Activated B cell treated with CpG ODN at 0.5 μM for 24 hours (primary cell): ENCODE measurements at regions of chr2 and their contacts with region 1.

Region 1: GRCh38 chr2:161273038-161273760 is 35.0 kb upstream of the PSMD14 start:
- DNase-seq: no peak
- ATAC-seq: peak; percentile 18
- H3K4me3 Mint-ChIP-seq: no peak overlapping the region
- H3K27ac Mint-ChIP-seq: no peak overlapping the region
- H3K4me1 Mint-ChIP-seq: no peaks in the 10 kb centered on the region
- H3K27me3 Mint-ChIP-seq: no peaks in the 10 kb centered on the region
- CTCF ChIP-seq: no peak

Region 2: DNA sequence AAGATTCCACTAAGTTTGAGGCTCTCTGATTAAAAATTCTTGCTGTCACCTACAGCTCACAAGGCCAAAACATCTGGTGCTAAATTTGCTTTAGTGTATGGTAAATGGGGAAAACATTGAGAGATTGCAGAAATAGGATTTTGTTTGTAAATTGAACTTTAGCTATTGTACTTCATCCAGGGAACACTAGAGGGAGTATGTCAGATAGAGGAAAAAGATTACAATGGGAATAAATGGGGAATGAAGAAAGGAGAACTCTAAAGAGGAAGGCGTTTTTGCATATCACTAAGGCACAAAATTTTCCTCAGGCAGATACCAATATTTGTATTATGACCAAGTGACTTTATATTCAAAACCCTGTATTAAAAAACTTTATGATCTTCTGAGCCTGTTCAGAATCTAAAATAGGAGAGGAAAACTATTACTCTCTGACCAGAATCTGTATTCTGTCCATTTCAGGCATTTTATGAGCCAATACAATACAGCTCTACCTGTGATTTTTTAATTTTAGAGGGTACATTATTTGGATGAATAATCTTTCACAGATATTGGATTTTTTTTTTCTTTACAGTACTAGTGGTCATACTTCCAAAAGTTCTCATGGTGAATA is 1020.8 kb before region 1 on chr2:
- CTCF ChIA-PET with region 1: no interaction called
- POLR2A ChIA-PET with region 1: no interaction called
- intact Hi-C with region 1: loop called (anchors 1 kb)
- DNase-seq: no peak
- ATAC-seq: no peak
- H3K4me3 Mint-ChIP-seq: no peak overlapping the region
- H3K27ac Mint-ChIP-seq: no peak overlapping the region
- H3K4me1 Mint-ChIP-seq: peaks cover 6% of the 10 kb centered on the region
- H3K27me3 Mint-ChIP-seq: peaks cover 8% of the 10 kb centered on the region
- CTCF ChIP-seq: peak; percentile 71

Region 3: GRCh38 chr2:160353166-160353565 is 920.0 kb before region 1 on chr2:
- CTCF ChIA-PET with region 1: no interaction called
- POLR2A ChIA-PET with region 1: no interaction called
- intact Hi-C with region 1: loop called (anchors 1 kb)
- DNase-seq: no peak
- ATAC-seq: peak; percentile 70
- H3K4me3 Mint-ChIP-seq: no peak overlapping the region
- H3K27ac Mint-ChIP-seq: no peak overlapping the region
- H3K4me1 Mint-ChIP-seq: peaks cover 10% of the 10 kb centered on the region
- H3K27me3 Mint-ChIP-seq: no peaks in the 10 kb centered on the region
- CTCF ChIP-seq: no peak

Region 4: GRCh38 chr2:160994141-160995002 is 278.8 kb before region 1 on chr2:
- CTCF ChIA-PET with region 1: interaction called, 4 read pairs
- POLR2A ChIA-PET with region 1: no interaction called
- intact Hi-C with region 1: loop called (anchors 5 kb)
- DNase-seq: no peak
- ATAC-seq: peak; percentile 37
- H3K4me3 Mint-ChIP-seq: no peak overlapping the region
- H3K27ac Mint-ChIP-seq: no peak overlapping the region
- H3K4me1 Mint-ChIP-seq: peaks cover 3% of the 10 kb centered on the region
- H3K27me3 Mint-ChIP-seq: no peaks in the 10 kb centered on the region
- CTCF ChIP-seq: peak; percentile 38

Region 5: GRCh38 chr2:161223139-161223732 is 50.0 kb before region 1 on chr2:
- CTCF ChIA-PET with region 1: interaction called, 30 read pairs
- POLR2A ChIA-PET with region 1: no interaction called
- intact Hi-C with region 1: loop called (anchors 1 kb)
- DNase-seq: no peak
- ATAC-seq: peak; percentile 67
- H3K4me3 Mint-ChIP-seq: no peak overlapping the region
- H3K27ac Mint-ChIP-seq: no peak overlapping the region
- H3K4me1 Mint-ChIP-seq: peaks cover 2% of the 10 kb centered on the region
- H3K27me3 Mint-ChIP-seq: no peaks in the 10 kb centered on the region
- CTCF ChIP-seq: no peak

Region 6: DNA sequence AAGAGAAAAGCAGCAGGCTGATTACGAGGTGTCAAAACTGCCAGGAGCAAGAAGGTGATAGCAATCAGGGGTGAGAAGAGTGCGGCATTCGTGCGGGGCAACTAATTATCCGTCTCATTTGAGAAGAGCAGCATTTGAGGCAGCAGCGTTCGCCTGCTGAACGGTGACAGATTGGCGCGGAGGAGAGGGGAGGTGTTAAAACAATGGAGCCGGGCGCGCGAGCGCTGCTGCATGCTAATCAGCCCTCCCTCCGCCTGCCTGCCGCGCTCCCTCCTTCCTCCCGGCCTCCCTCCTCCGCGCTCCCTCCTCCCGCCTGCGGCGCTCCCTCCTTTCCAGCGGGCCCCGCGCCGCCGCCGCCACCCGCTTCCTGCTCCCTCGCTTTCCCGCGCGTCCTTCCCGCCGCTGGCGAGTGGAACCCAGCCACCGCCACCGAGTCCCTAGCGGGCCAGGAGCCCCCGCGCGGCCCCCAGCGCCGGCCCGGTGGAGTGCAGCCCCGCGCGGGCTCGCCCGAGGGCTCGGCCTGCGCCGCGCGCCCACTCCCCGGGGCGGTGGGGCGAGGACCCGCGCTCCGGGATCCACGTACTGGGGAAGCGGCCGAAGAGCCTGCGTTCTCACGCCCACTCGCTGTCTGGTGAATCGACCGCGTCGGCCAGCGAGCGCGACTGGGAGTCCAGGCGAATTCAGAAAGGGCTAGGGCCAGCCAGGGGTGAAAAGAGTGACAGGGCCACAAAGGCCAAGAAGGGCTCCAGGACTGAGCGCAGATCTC is 34.5 kb before region 1 on chr2:
- CTCF ChIA-PET with region 1: no interaction called
- POLR2A ChIA-PET with region 1: no interaction called
- intact Hi-C with region 1: loop called (anchors 1 kb)
- DNase-seq: peak; percentile 41
- ATAC-seq: peak; percentile 45
- H3K4me3 Mint-ChIP-seq: peak overlapping the region; percentile 86
- H3K27ac Mint-ChIP-seq: peak overlapping the region; percentile 54
- H3K4me1 Mint-ChIP-seq: peaks cover 55% of the 10 kb centered on the region
- H3K27me3 Mint-ChIP-seq: peaks cover 2% of the 10 kb centered on the region
- CTCF ChIP-seq: no peak

Region 7: GRCh38 chr2:161321944-161322648 is 48.9 kb after region 1 on chr2:
- CTCF ChIA-PET with region 1: no interaction called
- POLR2A ChIA-PET with region 1: no interaction called
- intact Hi-C with region 1: no loop called
- DNase-seq: no peak
- ATAC-seq: no peak
- H3K4me3 Mint-ChIP-seq: no peak overlapping the region
- H3K27ac Mint-ChIP-seq: no peak overlapping the region
- H3K4me1 Mint-ChIP-seq: no peaks in the 10 kb centered on the region
- H3K27me3 Mint-ChIP-seq: no peaks in the 10 kb centered on the region
- CTCF ChIP-seq: no peak